ENCODE measurements at regions of chr12 and their contacts with region 1.

Region 1: DNA sequence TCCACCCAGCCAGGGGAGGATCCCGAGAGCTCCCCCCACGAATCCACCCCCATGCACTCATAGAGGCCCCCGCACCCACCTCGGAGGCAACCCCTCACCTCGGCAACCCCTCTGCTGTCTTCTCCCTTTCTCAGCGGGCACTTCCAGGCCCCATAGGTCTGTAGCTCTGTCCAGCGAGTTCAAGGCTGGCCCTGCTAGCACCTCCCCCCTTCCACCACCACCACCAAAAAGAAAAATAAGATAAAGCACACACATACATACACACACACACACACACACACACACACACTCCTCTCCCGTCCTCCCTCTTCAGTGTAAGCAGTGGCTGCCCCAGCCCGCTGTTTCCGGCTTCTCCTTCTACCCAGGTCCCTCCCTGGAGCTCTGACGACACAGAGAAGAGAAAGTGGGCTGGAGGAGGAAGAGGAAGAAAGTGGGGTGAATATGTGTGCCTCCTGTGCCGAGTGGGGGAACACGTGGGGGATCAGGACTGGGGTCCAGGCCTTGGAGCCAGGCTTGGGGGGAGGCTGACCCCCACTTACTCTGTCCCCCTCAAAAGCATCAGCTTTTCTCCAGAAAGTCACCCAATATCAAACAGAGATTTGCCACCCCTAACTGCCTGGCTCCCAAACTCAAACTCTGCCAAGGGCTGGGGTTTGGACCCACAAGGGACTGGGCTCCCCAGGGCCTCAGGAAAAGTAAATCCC is at the start of gene STAT6:
- DNase-seq: peak; percentile 80
- CTCF ChIP-seq: no peak

Region 2: DNA sequence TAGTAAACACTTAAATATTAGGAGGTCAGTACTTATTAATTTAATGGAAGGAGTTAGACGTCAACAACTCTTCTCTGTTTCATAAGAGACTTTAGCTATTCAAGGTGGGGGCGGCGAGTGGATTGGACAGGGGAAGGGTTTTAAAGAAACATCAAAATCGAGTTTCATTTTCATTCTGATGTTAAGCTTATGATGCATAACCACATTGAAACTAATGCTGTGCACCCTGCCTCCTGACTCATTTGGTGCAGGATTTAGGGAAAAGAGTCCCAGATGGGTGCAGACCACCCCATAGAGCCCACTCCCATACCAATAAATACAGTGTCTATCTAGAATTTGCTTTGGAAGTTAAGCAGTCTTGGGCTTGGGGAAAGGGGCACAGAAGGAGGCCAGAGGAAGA is 112.2 kb before region 1 on chr12:
- CTCF ChIA-PET with region 1: interaction called, 28 read pairs
- POLR2A ChIA-PET with region 1: no interaction called
- DNase-seq: peak; percentile 80
- CTCF ChIP-seq: no peak

Region 3: DNA sequence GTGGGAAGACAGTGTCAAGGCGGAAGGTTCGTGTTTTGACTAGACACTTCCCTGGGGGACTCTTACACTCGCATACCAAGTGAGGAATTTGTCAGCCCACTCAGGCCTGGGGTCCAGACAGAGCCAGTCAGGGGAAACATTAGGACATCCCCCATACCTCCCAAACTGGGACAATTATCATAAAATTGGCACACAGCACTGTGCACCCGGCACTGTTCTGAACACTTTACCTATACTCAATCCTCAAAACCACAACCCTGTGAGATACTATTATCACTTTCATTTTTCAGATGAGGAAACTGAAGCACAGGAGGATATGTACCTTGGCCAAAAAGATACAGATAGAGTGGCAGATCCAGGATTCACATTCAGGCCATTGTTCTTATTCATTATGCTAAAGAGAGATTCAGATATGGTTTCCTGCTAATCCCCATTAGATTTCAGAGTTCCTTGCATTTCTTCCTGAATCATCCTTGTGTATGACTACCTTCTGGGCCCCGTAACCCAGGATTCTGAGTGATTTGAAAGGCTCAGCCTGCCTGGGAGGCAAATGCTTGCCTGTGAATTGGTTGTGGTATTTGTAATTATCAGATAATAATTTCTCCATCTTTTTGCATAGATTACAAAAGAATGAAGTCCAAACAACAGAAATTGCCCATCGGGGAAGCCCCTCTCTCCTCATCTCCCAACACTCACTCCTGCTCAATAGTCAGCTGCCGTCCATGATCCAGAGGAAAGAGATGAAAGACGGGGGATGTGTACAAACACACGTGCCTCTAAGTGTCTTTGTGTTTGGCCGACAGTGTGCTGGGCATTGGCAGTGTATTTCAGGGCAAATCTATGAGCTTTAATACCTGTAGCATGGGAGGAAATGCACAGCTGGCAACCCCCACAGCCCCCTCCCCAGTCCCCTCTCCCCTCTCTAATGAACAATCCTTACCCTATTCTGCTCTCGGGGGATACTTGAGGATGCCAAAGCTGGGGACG is 99.5 kb before region 1 on chr12:
- CTCF ChIA-PET with region 1: interaction called, 34 read pairs
- POLR2A ChIA-PET with region 1: no interaction called
- DNase-seq: peak; percentile 39
- CTCF ChIP-seq: no peak

Region 4: DNA sequence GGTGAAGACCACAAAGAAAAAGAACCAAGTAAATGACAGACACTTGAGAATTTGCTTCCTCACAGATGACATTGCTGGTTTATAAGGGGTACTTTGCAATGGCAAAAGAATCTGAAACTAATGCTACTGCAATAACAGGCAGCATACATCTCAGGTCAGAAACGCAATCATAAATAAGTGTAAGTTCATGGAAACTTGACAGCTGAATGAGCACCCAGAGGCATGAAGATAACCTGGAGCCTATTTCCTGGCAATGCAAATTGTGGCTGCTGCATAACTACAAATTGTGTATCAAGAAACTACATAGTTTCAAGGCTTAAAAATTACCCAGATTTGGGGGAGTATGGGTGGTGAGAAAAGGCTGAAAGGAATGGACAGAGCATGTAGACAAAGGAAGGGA is 52.7 kb before region 1 on chr12:
- CTCF ChIA-PET with region 1: interaction called, 11 read pairs
- POLR2A ChIA-PET with region 1: no interaction called
- DNase-seq: no peak
- CTCF ChIP-seq: no peak

Region 5: DNA sequence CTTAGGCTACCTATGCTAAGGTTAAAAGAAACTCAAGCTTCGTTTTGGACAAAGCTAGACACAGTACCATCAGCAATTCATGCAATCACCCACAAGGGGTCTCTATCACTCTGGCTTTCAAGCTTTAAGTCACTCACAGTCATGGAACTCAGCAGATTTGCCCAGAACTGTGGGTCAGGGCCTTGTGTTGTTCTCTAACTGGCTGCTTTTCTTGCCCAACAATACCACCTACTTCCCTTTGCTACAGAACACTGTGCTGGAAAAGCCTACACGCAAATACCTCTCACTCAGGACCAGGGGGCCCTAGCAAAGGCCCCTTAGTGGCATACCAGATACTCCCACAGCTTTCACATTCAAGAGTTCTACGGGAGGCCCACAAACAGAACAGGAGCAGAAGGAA is 41.7 kb before region 1 on chr12:
- CTCF ChIA-PET with region 1: interaction called, 224 read pairs
- POLR2A ChIA-PET with region 1: interaction called, 15 read pairs
- DNase-seq: peak; percentile 65
- CTCF ChIP-seq: peak; percentile 75

Region 6: DNA sequence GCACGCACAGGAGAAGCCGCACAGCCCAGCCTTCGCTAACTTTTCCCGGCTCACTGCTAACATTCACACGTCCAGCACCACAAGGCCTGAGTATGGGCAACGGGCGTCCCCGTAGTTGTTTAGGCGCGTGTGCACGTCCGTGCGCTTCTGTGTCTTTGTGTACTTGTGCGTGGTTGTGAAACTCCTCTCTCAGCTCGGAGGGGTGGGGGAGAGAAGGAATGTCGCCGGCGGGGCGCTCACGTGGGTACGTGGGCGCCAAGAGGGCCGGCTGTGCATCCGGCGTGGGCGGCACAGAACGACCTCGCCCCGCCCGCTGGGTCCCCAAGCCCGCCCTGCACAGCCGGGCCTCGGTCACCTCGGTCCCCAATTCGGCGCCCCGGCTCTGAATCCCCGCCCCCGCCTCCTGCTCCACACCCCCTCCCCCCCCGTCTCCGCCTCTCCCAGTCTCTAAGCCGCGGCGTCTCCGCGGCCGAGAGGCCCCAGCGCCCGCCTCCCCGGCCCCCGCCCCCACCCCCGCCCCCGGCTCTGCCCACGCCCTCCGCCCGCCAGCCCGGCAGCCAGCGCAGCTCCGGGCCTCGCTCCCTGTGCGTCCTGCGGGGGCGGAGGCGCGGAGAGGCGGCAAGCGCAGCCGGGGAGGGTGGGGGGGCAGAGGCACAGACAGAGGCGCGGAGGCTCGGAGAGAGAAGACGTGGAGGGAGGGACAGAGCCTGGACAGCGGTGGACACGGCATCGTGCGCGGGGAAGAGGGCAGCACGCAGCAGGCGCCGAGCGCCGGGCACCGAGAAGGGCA is 22.5 kb before region 1 on chr12 and contains the start of gene NAB2:
- CTCF ChIA-PET with region 1: interaction called, 213 read pairs
- POLR2A ChIA-PET with region 1: interaction called, 13 read pairs
- DNase-seq: peak; percentile 92
- CTCF ChIP-seq: no peak

Region 7: GRCh38 chr12:57148469-57149244 is 37.5 kb after region 1 on chr12:
- CTCF ChIA-PET with region 1: no interaction called
- POLR2A ChIA-PET with region 1: no interaction called
- DNase-seq: no peak
- CTCF ChIP-seq: no peak

Region 8: GRCh38 chr12:57182921-57183790 is 72.0 kb after region 1 on chr12:
- CTCF ChIA-PET with region 1: interaction called, 11 read pairs
- POLR2A ChIA-PET with region 1: no interaction called
- DNase-seq: peak; percentile 95
- CTCF ChIP-seq: peak; percentile 90

Region 9: GRCh38 chr12:57296291-57296690 is 185.1 kb after region 1 on chr12:
- CTCF ChIA-PET with region 1: no interaction called
- POLR2A ChIA-PET with region 1: no interaction called
- DNase-seq: no peak
- CTCF ChIP-seq: no peak

Region 10: GRCh38 chr12:57401165-57401564 is 290.0 kb after region 1 on chr12:
- CTCF ChIA-PET with region 1: no interaction called
- POLR2A ChIA-PET with region 1: no interaction called
- DNase-seq: no peak
- CTCF ChIP-seq: no peak

Region 11: GRCh38 chr12:57452937-57453509 is 341.8 kb after region 1 on chr12:
- CTCF ChIA-PET with region 1: no interaction called
- POLR2A ChIA-PET with region 1: no interaction called
- DNase-seq: peak; percentile 66
- CTCF ChIP-seq: peak; percentile 94